ENCODE measurements at regions of chr1 and their contacts with region 1.

Region 1: GRCh38 chr1:213015099-213016050 is at the start of gene ANGEL2:
- DNase-seq: peak; percentile 97
- H3K4me3 Mint-ChIP-seq: peak within 1 kb of the TSS; percentile 98
- H3K27ac Mint-ChIP-seq: peak within 1 kb of the TSS; percentile 99
- H3K4me1 Mint-ChIP-seq: peaks cover 30% of the 10 kb centered on the region
- H3K27me3 Mint-ChIP-seq: no peaks in the 10 kb centered on the region
- total RNA-seq, gene ANGEL2: 41.3 to 46.4 TPM

Region 2: DNA sequence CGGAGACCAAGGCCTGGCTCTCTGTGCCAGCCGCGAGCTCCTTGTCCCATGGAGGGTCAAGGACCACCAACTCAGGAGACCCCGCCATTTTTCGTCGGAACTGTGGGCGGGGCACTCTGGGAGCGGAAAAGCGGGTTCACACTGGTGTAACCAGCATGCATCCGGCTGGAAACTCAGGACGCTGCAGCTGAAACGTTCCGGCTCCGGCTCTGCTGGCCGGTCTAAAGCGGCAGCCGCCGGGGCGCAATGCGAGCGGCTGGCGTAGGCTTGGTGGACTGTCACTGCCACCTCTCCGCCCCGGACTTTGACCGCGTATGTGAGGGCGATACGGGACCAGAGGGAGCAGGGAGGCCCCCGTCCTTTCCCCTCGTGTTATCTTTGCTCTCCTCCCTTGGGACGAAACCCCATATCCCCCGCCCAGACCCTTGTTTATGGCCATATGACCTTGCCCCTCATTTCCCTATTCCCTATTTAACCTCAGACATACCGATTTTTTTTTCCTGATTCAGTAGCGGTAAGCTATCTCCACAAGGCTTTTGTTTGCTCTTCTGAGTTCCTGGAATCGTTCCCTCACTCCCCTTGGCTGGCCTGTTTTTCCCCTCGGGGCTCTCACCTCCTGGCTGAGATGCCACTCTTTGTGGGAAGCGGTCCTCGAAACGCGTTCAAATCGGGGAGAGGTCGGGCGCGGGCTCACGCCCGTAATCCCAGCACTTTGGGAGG is 223.5 kb before region 1 on chr1 and contains the starts of genes NSL1 and TATDN3:
- CTCF ChIA-PET with region 1: no interaction called
- POLR2A ChIA-PET with region 1: no interaction called
- intact Hi-C with region 1: loop called (anchors 1 kb)
- DNase-seq: peak; percentile 97
- H3K4me3 Mint-ChIP-seq: peak within 1 kb of the TSS; percentile 95
- H3K27ac Mint-ChIP-seq: peak within 1 kb of the TSS; percentile 82
- H3K4me1 Mint-ChIP-seq: peaks cover 32% of the 10 kb centered on the region
- H3K27me3 Mint-ChIP-seq: no peaks in the 10 kb centered on the region
- total RNA-seq, gene NSL1: 39.8 to 41.8 TPM
- total RNA-seq, gene TATDN3: 19.2 to 20.7 TPM

Region 3: DNA sequence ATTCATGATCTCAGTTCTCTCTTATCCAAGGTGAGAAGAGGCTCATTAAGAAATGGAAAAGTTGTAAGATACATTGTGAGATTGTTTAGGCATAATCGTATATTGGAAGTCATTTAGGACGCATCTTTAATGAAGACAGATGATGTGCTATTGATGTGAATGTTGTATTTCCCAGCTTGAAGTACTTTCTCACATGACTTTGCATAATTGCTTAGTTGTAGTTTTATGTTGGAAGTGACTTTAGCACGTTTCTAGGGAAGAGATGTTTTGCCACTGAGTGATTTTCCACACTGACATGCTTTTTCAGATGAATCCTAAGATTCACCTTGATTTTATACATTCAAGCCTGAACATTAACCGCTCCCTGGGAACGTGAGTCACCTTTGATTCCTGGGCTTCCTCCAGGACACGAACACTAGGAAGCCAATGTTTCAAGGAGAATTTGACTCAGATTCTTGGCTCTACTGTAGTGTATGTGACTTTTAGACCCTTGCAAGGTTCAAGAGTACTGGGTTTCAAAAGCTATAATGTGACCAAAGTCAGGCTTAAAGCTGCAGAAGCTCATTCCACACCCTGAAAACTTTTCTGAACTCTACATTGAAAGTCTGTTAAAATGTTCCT is 27.6 kb before region 1 on chr1:
- CTCF ChIA-PET with region 1: no interaction called
- POLR2A ChIA-PET with region 1: no interaction called
- intact Hi-C with region 1: no loop called
- DNase-seq: no peak
- H3K4me3 Mint-ChIP-seq: no peak overlapping the region
- H3K27ac Mint-ChIP-seq: no peak overlapping the region
- H3K4me1 Mint-ChIP-seq: peaks cover 7% of the 10 kb centered on the region
- H3K27me3 Mint-ChIP-seq: no peaks in the 10 kb centered on the region

Region 4: DNA sequence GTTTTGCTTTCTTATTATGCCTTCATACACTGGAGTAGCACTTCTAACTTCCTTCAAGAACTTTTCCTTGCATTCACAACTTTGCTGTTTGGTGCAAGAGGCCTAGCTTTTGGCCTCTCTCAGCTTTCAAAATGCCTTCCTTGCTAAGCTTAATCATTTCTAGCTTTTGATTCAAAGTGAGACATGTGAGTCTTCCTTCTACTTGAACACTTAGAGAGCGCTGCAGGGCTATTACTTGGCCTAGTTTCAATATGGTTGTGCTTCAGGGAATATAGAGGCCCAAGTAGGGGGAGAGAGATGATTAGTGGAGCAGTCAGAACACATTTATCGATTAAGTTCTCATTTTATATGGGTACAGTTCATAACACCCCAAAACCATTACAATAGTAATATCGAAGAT is 12.1 kb before region 1 on chr1:
- CTCF ChIA-PET with region 1: interaction called, 5 read pairs
- POLR2A ChIA-PET with region 1: interaction called, 10 read pairs
- intact Hi-C with region 1: loop called (anchors 1 kb)
- DNase-seq: peak; percentile 48
- H3K4me3 Mint-ChIP-seq: no peak overlapping the region
- H3K27ac Mint-ChIP-seq: peak overlapping the region; percentile 57
- H3K4me1 Mint-ChIP-seq: peaks cover 13% of the 10 kb centered on the region
- H3K27me3 Mint-ChIP-seq: no peaks in the 10 kb centered on the region

Region 5: GRCh38 chr1:213051127-213051880 is 35.9 kb after region 1 on chr1 and contains the start of gene RPS6KC1:
- CTCF ChIA-PET with region 1: no interaction called
- POLR2A ChIA-PET with region 1: no interaction called
- intact Hi-C with region 1: loop called (anchors 1 kb)
- DNase-seq: peak; percentile 90
- H3K4me3 Mint-ChIP-seq: peak within 1 kb of the TSS; percentile 98
- H3K27ac Mint-ChIP-seq: peak within 1 kb of the TSS; percentile 83
- H3K4me1 Mint-ChIP-seq: peaks cover 21% of the 10 kb centered on the region
- H3K27me3 Mint-ChIP-seq: peaks cover 1% of the 10 kb centered on the region
- total RNA-seq, gene RPS6KC1: 5.9 to 6.7 TPM

Measured in activated CD4-positive, alpha-beta memory T cell treated with anti-CD3 and anti-CD28 coated beads for 36 hours (primary cell).